Common myeloid progenitor, CD34-positive (primary cell): ENCODE measurements at regions of chr4 and their contacts with region 1.

Region 1: DNA sequence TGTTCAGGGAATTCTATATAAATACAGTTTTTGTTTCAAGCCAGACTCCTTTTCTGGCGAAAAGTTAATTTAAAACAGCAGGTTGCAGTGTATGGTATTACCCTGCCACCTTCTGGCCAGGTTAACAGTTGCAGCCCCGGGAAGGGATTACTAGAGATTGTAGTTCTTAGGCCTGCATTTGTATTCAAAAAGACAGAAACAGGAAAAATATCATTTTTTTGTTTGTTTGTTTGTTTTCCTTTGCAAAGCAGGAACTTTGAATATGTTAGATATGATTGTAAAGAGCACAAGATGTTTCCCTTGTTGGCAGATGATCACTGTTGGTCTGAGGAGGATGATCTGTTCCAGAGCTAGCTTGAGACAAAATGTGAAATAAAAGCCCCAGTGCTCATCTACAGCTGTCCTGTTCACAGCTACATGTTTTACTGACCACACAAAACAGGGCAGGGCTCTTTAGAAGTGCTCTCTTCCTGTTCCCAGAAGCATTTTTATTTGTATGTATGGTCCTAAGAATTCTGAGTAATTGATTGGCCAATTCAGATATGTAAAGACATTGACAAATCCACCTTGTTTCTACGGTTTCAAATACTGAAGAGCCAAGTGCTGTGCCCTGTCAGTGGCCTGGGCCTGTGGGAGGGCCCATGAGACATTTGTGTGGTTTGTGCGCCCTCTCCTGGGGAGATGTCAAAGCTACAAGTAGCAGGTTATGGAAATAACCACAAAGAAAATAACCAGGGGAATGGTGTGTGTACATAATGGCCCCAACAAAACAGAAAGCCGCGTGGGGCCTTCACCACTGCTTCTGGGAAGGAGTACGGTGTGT is 57.9 kb downstream of the CLDN22 start:
- DNase-seq: peak; percentile 77 to 90 (median 85)
- H3K4me3 ChIP-seq: no peak overlapping the region
- H3K27ac ChIP-seq: peak overlapping the region in 1 of 2 experiments; percentile 32
- H3K4me1 ChIP-seq: peaks cover 0 to 8% (median 4%) of the 10 kb centered on the region in 4 experiments
- H3K27me3 ChIP-seq: no peaks in the 10 kb centered on the region

Region 2: DNA sequence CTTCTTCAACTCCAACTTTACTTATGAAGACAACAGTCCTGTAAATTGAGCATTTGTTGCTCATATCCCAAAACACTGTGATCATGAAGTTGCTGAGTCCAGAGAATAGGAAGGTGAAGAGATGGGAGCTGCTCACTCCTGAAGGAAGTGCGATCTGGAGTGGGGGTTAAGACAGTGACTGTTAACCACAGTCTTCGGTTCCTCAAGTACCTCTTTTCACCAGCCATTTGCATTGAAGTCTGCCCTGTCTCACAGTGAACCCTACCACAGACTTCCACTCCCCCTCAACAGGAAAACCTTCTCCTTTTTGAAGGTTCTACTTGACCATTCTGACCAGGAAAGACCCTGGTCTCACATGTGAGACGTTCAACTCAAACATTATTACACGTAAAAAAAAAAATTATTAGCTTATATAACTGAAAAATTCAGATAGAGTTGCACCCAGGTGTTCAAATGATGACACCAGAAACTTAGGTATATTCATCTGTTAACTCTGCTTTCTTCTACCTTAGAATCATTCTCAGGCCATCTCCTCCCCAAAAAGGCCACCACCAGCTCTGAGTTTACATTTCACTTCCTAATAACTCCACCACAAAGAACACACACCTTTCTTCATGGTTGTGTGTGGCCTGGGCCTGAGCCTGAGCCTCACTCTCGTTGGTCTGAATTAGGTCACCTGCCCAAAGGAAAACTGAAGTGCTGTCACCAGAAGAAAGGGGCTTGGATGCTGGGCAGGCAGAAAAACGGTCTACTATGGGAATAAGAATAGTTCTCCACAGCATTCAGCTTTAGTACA is 544.2 kb before region 1 on chr4:
- CTCF ChIA-PET with region 1: no interaction called
- POLR2A ChIA-PET with region 1: no interaction called
- DNase-seq: no peak
- H3K4me3 ChIP-seq: no peak overlapping the region
- H3K27ac ChIP-seq: no peak overlapping the region
- H3K4me1 ChIP-seq: no peaks in the 10 kb centered on the region
- H3K27me3 ChIP-seq: no peaks in the 10 kb centered on the region

Region 3: DNA sequence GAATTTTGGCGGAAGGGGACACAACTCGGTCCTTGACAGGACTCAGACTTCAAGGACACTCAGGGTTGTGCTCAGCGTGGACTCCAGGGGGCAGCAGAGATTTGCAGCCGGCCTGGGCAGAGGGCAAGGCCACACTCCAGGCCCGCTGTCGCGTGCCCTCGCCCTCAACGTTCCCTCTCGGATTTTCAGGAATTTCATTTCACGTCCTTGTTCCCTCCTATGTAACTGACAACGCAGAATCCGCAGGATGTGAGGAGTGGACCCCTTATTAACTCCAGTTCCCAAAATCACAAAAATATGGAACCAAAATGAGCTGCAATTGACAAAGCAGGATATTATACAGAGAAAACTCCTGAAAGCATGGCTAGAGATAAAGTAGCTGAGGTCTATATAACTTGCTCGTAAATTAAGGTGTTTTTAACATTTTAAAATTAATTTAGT is 323.9 kb before region 1 on chr4:
- CTCF ChIA-PET with region 1: interaction called, 137 read pairs
- POLR2A ChIA-PET with region 1: no interaction called
- DNase-seq: peak; percentile 65 to 75 (median 71)
- H3K4me3 ChIP-seq: no peak overlapping the region
- H3K27ac ChIP-seq: no peak overlapping the region
- H3K4me1 ChIP-seq: peaks cover 0 to 1% (median 0%) of the 10 kb centered on the region in 4 experiments
- H3K27me3 ChIP-seq: peaks cover 0 to 2% (median 0%) of the 10 kb centered on the region in 5 experiments

Region 4: DNA sequence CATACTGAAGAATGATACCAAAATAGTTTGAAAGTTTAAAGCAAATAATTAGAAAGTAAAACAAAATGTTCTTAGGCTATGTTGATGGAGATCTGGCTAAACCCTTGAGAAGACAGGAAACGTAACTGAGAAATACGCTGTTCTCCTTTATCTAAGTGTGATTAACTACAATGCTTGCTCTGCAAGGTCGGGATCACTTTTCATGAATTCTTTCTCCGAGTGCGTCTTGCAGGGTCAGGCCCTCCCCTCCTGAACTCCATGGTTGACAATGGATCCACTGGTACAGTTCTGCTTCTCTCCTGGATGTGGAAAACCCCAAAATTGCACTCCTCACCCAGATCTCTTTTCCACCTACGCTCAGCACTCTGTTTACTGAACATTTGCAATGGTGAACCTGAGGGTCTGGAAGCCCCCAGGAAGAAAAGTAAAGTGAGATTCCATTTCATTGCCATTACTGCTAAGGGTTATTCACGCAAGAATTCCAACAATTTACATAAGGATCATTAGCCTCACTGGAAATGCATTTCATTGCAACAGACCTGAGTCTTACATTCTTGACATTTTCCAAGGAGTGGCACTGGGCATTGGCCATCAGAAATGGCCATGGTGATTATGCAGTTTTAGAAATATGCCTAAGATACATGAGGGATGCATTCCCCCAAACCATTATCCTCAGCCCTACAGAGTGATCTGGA is 187.7 kb before region 1 on chr4:
- CTCF ChIA-PET with region 1: interaction called, 146 read pairs
- POLR2A ChIA-PET with region 1: no interaction called
- DNase-seq: no peak
- H3K4me3 ChIP-seq: no peak overlapping the region
- H3K27ac ChIP-seq: no peak overlapping the region
- H3K4me1 ChIP-seq: no peaks in the 10 kb centered on the region
- H3K27me3 ChIP-seq: peaks cover 0 to 1% (median 0%) of the 10 kb centered on the region in 5 experiments

Region 5: GRCh38 chr4:183249857-183250256 is 12.3 kb before region 1 on chr4:
- CTCF ChIA-PET with region 1: interaction called, 68 read pairs
- POLR2A ChIA-PET with region 1: no interaction called
- DNase-seq: peak; percentile 43 to 74 (median 69)
- H3K4me3 ChIP-seq: no peak overlapping the region
- H3K27ac ChIP-seq: no peak overlapping the region
- H3K4me1 ChIP-seq: no peaks in the 10 kb centered on the region
- H3K27me3 ChIP-seq: no peaks in the 10 kb centered on the region

Region 6: GRCh38 chr4:183272384-183272783 is 10.2 kb after region 1 on chr4:
- CTCF ChIA-PET with region 1: interaction called, 16 read pairs
- POLR2A ChIA-PET with region 1: no interaction called
- DNase-seq: no peak
- H3K4me3 ChIP-seq: no peak overlapping the region
- H3K27ac ChIP-seq: no peak overlapping the region
- H3K4me1 ChIP-seq: no peaks in the 10 kb centered on the region
- H3K27me3 ChIP-seq: no peaks in the 10 kb centered on the region

Region 7: DNA sequence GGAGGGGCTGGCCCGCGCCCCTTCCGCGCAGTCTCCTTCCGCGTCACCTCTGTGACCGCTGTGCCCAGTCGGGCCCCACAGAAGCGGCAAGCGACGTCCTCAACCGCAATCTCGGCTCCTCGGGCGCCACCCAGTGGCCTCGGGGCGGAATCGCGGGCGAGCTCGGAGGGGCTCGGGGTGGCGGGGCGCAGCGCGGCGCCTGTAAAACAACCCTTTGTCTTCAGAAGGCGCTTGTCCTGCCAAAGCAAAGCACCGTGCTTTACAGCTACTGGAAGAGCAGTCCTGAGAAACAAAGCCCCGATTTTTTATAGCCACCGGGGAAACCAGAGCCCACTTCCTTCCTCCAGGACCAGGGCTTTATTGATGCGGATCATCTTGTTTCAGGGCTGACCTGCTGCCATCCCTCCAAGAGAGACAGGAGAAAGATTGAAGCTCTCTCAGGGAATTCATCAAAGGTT is 145.0 kb after region 1 on chr4:
- CTCF ChIA-PET with region 1: interaction called, 14 read pairs
- POLR2A ChIA-PET with region 1: no interaction called
- DNase-seq: peak; percentile 90 to 95 (median 94)
- H3K4me3 ChIP-seq: peak overlapping the region in 6 of 7 experiments; percentile 50 to 85 (median 66)
- H3K27ac ChIP-seq: peak overlapping the region; percentile 47 to 63
- H3K4me1 ChIP-seq: peaks cover 0 to 21% (median 14%) of the 10 kb centered on the region in 4 experiments
- H3K27me3 ChIP-seq: no peaks in the 10 kb centered on the region